ENCODE measurements at regions of chr20 and their contacts with region 1.

Region 1: DNA sequence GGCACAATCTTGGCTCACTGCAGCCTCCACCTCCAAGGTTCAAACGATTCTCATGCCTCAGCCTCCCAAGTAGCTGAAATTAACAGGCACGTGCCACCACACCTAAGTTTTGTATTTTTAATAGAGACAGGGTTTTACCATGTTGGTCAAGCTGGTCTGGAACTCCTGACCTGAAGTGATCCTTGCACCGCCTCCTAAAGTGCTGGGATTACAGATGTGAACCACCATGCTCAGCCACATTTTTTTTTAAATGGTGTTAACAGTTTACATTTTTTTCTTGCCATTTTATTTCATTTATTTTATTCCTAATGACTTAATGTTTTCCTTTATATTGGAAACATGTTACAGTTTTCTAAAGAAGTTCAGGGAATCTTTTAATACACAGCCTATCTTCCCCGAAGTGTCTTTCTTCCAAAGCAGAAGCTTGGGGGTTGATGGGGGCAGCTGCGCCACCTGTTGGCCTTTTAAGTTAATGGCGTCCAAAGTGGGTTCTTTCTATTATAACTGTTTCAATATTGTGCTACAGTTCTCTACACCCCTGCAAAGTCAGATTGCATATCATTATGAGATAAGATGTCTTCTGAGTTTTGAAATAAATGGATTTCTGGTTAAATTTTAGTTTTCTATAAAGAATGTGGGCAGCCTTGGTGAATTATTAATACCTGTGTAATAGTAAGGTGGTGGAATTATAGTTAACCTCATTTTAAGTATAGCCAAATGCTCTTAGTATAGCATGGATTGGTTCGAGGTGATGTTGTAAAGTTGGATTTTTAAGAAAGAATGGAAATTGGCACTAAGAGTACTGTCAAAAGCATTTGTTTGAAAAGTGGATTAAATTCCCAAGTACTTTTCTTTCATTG is 42.0 kb upstream of the PLCG1 start:
- DNase-seq: peak; percentile 55
- H3K4me3 ChIP-seq: no peak overlapping the region
- H3K27ac ChIP-seq: no peak overlapping the region
- H3K27me3 ChIP-seq: no peaks in the 10 kb centered on the region
- CTCF ChIP-seq: peak; percentile 87

Region 2: DNA sequence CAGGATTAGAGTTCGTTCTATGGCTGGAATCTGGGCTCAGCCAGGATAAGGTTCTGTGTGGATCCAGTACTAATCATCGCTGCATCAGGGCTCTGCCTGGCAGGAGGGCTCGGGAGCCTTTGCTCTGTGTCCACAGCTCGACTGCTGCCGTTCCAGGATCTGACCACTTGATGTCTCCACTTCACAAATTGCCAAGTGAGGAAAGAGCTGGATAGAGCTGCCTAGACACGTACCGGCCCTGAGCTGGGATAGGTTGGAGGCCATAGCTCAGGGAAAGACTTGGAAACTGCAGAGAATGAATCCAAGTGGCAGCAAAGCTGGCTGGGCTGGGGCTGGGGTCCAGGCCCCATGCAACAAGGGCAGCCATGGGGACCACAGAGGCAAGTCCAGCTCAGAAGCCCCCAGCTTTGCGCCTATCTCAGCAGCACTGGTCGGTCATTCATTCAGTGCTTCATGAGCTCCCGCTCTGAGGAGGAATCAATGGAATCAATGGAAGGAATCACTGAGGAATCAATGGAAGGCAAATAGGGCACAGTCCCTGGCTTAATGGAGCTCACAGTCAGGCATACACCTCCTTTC is 104.7 kb before region 1 on chr20:
- in situ Hi-C with region 1: loop called (anchors 25 kb)
- DNase-seq: peak; percentile 89
- H3K4me3 ChIP-seq: no peak overlapping the region
- H3K27ac ChIP-seq: no peak overlapping the region
- H3K27me3 ChIP-seq: no peaks in the 10 kb centered on the region
- CTCF ChIP-seq: peak; percentile 93

Region 3: DNA sequence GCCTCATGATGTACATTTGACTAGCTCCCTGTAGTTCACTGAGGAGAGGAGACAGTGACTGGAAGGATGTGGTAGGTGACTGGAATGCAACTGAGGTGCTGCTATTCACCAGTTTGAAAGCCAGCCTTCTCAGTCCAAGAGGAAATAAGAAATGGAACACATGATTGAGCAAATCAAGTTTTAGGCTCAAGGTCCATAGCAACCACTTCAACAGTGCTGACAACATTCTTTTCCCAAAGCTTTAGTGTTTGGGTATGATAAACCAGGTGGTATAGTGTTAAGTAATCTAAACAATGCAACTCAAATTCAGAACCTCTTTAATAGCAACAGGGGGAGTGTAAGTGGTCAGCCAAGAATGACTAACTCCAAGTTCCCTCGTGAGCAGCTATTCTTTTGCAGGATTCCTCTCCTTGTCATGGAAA is 213.0 kb after region 1 on chr20:
- in situ Hi-C with region 1: no loop called
- DNase-seq: peak; percentile 78
- H3K4me3 ChIP-seq: no peak overlapping the region
- H3K27ac ChIP-seq: peak overlapping the region; percentile 77
- H3K27me3 ChIP-seq: no peaks in the 10 kb centered on the region
- CTCF ChIP-seq: no peak